ENCODE measurements at regions of chr12 and their contacts with region 1.

Region 1: DNA sequence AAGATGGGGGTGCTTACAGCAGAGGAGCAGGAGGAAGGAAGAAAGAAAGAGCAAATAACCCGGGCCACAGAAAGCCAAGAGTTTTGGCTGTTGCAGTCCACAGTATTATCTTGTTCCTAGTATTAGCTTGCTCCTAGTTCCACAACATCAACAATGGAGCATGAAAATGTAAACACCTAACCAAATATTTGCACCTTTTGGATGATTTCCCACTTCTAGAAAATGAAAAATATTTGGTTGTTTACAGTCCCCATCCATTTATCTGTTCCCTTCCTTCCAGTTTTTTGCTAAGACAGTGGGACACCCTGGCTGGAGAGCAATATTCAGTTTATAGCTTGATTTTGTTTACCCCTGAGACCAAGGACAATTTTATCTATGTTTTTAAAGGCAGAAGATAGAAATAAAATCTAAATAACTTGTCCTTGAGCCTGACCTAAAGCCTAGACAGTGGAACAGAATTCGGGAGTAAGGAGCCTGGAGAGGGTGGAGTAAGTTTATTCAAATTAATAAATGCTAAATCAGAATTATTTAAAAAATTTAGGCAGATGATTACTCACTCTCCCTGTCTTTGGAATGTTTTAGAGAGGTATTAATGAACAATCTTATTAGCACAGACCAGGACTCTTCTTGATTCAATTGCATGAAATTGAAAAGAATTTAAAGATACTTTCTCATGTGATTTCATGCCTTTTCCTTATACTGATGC is 51.6 kb downstream of the RESF1 start:
- DNase-seq: no peak
- H3K4me3 ChIP-seq: no peak overlapping the region
- CTCF ChIP-seq: no peak
- POLR2A ChIP-seq: no peak

Region 2: GRCh38 chr12:31629756-31630732 is 380.7 kb before region 1 on chr12:
- intact Hi-C with region 1: no loop called
- DNase-seq: no peak
- H3K4me3 ChIP-seq: no peak overlapping the region
- CTCF ChIP-seq: no peak
- POLR2A ChIP-seq: no peak

Region 3: GRCh38 chr12:31959701-31960391 is 50.9 kb before region 1 on chr12:
- intact Hi-C with region 1: loop called (anchors 5 kb)
- DNase-seq: peak; percentile 37 to 92
- H3K4me3 ChIP-seq: peak overlapping the region; percentile 75
- CTCF ChIP-seq: no peak
- POLR2A ChIP-seq: no peak

Region 4: GRCh38 chr12:32051559-32052414 is 41.0 kb after region 1 on chr12:
- intact Hi-C with region 1: no loop called
- DNase-seq: peak in 1 of 2 donors; percentile 20
- H3K4me3 ChIP-seq: no peak overlapping the region
- CTCF ChIP-seq: no peak
- POLR2A ChIP-seq: no peak

Measured in lower leg skin (tissue), 4 donors.